Endothelial cell of umbilical vein (primary cell): ENCODE measurements at regions of chr1 and their contacts with region 1.

Region 1: GRCh38 chr1:211514030-211514754 is 22.2 kb upstream of the RD3 start:
- DNase-seq: peak; percentile 82
- H3K4me3 ChIP-seq: no peak overlapping the region
- H3K27ac ChIP-seq: no peak overlapping the region
- H3K4me1 ChIP-seq: peaks cover 10% of the 10 kb centered on the region
- H3K27me3 ChIP-seq: no peaks in the 10 kb centered on the region
- CTCF ChIP-seq: peak; percentile 78 to 85
- POLR2A ChIP-seq: no peak

Region 2: DNA sequence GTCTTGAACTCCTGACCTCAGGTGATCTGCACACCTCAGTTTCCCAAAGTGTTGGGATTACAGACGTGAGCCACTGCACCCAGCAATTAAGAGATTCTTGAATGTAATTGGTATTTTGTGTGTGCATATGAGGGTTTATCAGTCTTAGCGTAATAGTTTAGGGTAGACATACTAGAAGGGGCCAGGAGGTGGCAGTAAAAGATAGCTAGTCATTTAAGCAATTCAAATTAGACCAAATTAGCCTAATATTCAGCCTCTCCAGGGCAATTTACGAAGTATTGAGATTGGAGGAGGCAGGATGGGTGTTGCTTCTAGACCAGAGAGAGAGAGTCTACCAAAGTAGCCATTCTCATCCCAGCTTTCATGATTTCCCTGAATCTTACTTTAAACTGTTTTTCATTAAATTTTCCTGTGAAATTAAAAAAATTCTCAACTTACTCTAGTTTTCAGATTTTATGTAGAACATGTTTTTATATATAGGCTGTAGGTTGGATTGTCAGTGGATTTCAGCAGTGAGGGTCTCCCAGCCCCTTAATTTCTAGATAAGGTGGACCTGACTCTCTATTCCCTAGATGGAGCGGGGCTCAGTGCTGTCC is 1065.8 kb before region 1 on chr1:
- CTCF ChIA-PET with region 1: interaction called, 22 read pairs
- POLR2A ChIA-PET with region 1: no interaction called
- dilution Hi-C with region 1: no loop called
- intact Hi-C with region 1: loop called (anchors 1 kb)
- DNase-seq: peak; percentile 62
- H3K4me3 ChIP-seq: no peak overlapping the region
- H3K27ac ChIP-seq: no peak overlapping the region
- H3K4me1 ChIP-seq: no peaks in the 10 kb centered on the region
- H3K27me3 ChIP-seq: peaks cover 0 to 3% of the 10 kb centered on the region in 2 experiments
- CTCF ChIP-seq: peak; percentile 32 to 50
- POLR2A ChIP-seq: no peak

Region 3: DNA sequence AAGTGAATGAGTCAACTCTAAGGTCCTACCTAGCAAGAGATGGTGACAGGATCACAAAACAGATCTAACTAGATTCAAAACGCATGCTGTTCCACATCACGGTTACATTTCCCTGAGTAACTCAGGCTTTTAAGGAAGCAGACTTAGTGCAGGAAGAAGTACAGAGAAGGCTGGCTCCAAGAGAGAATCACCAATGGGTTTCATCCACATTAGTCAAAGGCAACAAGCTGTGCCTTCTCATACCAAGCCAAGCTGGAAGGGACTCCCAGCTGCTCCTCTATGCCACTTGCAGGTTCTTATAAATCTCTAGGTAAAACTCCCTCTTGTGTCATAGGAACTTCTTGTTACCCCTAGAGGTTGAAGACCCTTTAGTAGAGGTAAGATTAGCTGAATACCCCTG is 489.3 kb before region 1 on chr1:
- CTCF ChIA-PET with region 1: no interaction called
- POLR2A ChIA-PET with region 1: no interaction called
- dilution Hi-C with region 1: no loop called
- intact Hi-C with region 1: no loop called
- DNase-seq: no peak
- H3K4me3 ChIP-seq: no peak overlapping the region
- H3K27ac ChIP-seq: no peak overlapping the region
- H3K4me1 ChIP-seq: no peaks in the 10 kb centered on the region
- H3K27me3 ChIP-seq: no peaks in the 10 kb centered on the region
- CTCF ChIP-seq: no peak
- POLR2A ChIP-seq: no peak

Region 4: GRCh38 chr1:211145944-211146343 is 368.2 kb before region 1 on chr1:
- CTCF ChIA-PET with region 1: no interaction called
- POLR2A ChIA-PET with region 1: no interaction called
- dilution Hi-C with region 1: no loop called
- intact Hi-C with region 1: no loop called
- DNase-seq: no peak
- H3K4me3 ChIP-seq: no peak overlapping the region
- H3K27ac ChIP-seq: no peak overlapping the region
- H3K4me1 ChIP-seq: no peaks in the 10 kb centered on the region
- H3K27me3 ChIP-seq: no peaks in the 10 kb centered on the region
- CTCF ChIP-seq: no peak
- POLR2A ChIP-seq: no peak

Region 5: GRCh38 chr1:211323156-211324063 is 190.8 kb before region 1 on chr1:
- CTCF ChIA-PET with region 1: interaction called, 97 read pairs
- POLR2A ChIA-PET with region 1: no interaction called
- dilution Hi-C with region 1: no loop called
- intact Hi-C with region 1: loop called (anchors 1 kb)
- DNase-seq: peak; percentile 68
- H3K4me3 ChIP-seq: no peak overlapping the region
- H3K27ac ChIP-seq: no peak overlapping the region
- H3K4me1 ChIP-seq: peaks cover 3% of the 10 kb centered on the region
- H3K27me3 ChIP-seq: no peaks in the 10 kb centered on the region
- CTCF ChIP-seq: peak; percentile 79 to 80
- POLR2A ChIP-seq: no peak

Region 6: DNA sequence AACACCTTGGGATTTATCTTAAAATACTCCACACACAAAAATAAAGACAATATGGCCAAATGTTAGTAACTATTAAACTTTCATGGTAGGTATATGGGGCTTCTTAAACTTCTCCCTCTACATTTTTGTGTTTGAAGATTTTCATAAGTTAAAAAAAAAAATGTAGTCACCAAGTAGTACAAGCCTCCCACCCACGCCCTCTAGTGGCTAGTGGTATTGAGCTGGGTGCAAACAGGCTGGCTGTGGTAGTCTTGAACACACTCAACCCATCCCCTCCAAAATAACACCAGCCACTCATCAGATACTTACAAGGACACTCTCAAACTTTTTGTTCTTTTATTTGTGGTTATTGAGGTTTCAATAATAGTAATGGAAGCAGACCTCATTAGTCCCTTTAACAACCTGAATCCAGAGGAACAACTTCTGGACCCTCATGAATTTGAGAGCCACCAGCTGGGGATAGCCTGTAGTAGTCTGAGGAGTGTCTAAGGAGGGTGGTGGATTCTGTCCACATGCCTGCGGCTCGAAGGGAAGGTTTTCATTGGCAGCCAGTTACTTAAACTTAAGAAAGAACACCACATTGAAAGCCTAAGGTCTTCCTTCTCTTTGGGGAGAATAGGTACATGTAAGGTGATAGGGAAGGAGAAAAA is 37.9 kb before region 1 on chr1:
- CTCF ChIA-PET with region 1: interaction called, 74 read pairs
- POLR2A ChIA-PET with region 1: no interaction called
- dilution Hi-C with region 1: no loop called
- intact Hi-C with region 1: loop called (anchors 1 kb)
- DNase-seq: peak; percentile 69
- H3K4me3 ChIP-seq: no peak overlapping the region
- H3K27ac ChIP-seq: no peak overlapping the region
- H3K4me1 ChIP-seq: no peaks in the 10 kb centered on the region
- H3K27me3 ChIP-seq: peaks cover 19 to 38% of the 10 kb centered on the region in 2 experiments
- CTCF ChIP-seq: peak; percentile 87 to 88
- POLR2A ChIP-seq: no peak

Region 7: DNA sequence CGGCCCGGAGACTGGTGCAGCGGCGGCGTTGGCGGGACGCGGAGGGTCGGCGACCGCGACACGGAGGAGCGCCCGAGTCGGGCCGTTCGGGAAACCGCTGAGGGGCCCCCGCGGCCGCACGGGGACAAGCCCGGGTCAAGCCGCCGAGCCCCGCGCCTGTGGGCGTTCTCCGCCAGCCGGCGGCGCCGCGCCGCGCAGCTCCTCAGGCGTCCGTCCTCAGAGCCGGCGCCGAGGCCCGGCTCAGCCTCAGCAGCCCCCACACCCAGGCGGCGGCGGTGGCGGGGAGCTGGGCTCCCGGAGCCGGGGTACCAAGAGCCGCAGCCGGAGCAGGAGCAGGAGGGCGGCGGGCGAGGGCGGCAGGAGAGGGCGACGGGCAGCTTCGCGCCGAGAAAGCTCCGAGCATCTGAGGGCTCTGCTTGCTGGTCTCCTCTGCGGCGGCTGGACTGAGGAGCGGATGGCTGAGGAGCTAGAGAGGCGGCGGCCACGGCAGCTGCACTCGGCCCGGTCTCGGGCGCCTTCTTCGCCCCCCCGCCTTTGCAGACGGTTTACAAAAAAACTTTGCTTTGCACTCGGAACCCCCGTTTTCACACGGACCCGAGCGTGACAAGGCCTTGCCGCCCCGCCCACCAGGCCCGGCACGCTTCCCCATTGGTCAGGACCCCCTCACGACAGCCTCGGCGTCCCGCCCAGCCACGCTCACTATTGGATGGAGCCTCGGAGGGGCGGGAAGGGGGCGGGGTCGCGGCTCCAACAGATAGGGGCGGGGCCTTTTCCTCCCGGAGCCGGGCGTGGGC is 64.6 kb after region 1 on chr1 and contains the start of gene SLC30A1:
- CTCF ChIA-PET with region 1: interaction called, 19 read pairs
- POLR2A ChIA-PET with region 1: no interaction called
- dilution Hi-C with region 1: no loop called
- intact Hi-C with region 1: loop called (anchors 1 kb)
- DNase-seq: peak; percentile 98
- H3K4me3 ChIP-seq: peak within 1 kb of the TSS; percentile 74 to 99 (median 98)
- H3K27ac ChIP-seq: peak within 1 kb of the TSS; percentile 64
- H3K4me1 ChIP-seq: peaks cover 33% of the 10 kb centered on the region
- H3K27me3 ChIP-seq: no peaks in the 10 kb centered on the region
- CTCF ChIP-seq: no peak
- POLR2A ChIP-seq: peak; percentile 94
- total RNA-seq, gene SLC30A1: 21.5 and 22.1 TPM in 2 replicates

Region 8: GRCh38 chr1:211654838-211655787 is 140.9 kb after region 1 on chr1:
- CTCF ChIA-PET with region 1: interaction called, 84 read pairs
- POLR2A ChIA-PET with region 1: no interaction called
- dilution Hi-C with region 1: no loop called
- intact Hi-C with region 1: loop called (anchors 1 kb)
- DNase-seq: peak; percentile 87
- H3K4me3 ChIP-seq: no peak overlapping the region
- H3K27ac ChIP-seq: peak overlapping the region; percentile 80
- H3K4me1 ChIP-seq: peaks cover 20% of the 10 kb centered on the region
- H3K27me3 ChIP-seq: no peaks in the 10 kb centered on the region
- CTCF ChIP-seq: peak; percentile 89 to 96
- POLR2A ChIP-seq: no peak